HEK293T (cell line): ENCODE measurements at regions of chr17 and their contacts with region 1.

Region 1: GRCh38 chr17:44199553-44200477 is at the start of gene ATXN7L3:
- DNase-seq: peak; percentile 97

Region 2: DNA sequence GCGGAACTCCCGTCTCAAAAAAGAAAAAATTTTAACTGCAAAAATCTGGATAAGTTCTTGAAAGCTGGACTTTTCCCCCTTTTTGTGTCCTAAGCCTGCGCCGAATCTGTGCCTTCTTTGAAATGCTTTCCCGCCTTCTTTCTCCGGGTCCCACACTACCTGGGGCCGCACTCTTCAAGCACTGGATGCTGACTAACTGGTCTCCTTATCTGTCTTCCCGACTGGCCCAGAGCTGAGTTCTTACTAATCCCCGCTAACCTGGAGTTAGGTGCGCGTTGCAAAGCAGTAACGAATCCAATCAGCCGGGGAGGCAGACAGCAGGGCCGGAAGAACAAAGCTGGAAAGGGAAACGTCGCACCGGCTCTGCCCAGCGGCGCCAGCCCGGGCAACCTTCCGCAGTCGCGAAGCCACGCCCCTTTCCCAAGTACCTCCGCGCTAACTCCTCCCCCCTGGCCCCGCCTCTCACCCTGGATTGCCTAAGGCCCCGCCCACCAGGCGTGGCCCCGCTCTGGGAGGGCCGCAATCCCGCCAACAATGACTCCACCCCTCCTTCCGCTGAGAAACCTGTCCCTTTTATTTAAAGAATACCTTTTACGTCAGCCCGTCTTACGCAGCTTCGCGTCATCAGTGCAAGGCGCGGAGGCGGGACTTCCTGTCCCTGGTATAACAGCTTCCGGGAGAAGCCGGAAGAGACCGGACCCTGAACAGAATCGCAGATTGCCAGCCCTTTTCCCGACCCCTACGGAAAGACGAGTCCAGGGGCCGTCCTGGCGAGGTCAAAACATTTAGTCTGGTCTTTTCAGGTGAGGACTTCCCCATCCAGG is 13.3 kb before region 1 on chr17 and contains the start of gene TMUB2:
- CTCF ChIA-PET with region 1: interaction called, 6 read pairs
- POLR2A ChIA-PET with region 1: interaction called, 31 read pairs
- DNase-seq: peak; percentile 100

Region 3: GRCh38 chr17:44210342-44211192 is 10.8 kb after region 1 on chr17:
- CTCF ChIA-PET with region 1: interaction called, 6 read pairs
- POLR2A ChIA-PET with region 1: interaction called, 14 read pairs
- DNase-seq: peak; percentile 90

Region 4: GRCh38 chr17:44218344-44219107 is 18.7 kb after region 1 on chr17:
- CTCF ChIA-PET with region 1: interaction called, 5 read pairs
- POLR2A ChIA-PET with region 1: interaction called, 27 read pairs
- DNase-seq: peak; percentile 86

Region 5: DNA sequence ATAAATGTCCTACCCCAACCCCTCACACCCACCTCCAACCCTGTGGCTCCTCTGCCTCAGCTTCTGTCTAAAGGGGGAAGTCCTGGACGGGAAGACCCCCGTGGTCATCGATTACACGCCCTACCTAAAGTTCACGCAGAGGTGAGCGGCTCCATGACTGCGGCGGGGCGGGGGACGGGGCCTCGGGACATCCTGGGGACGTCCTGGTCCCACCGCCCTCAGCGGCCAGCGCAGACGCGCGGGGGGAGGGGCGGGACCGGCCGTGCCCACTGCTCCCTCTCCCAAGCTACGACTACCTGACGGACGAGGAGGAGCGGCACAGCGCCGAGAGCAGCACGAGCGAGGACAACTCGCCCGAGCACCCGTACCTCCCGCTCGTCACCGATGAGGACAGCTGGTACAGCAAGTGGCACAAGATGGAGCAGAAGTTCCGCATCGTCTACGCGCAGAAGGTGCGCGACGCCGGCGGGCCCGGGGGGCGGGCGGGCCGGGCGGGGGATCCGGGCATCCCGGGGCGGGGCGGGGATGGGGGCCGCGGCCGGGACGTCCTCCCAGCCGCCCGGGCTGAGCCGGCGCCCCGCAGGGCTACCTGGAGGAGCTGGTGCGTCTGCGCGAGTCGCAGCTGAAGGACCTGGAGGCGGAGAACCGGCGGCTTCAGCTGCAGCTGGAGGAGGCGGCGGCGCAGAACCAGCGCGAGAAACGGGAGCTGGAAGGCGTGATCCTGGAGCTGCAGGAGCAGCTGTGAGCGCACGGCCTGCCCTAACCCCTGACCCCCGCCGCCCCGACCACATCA is 115.2 kb after region 1 on chr17:
- CTCF ChIA-PET with region 1: no interaction called
- POLR2A ChIA-PET with region 1: no interaction called
- DNase-seq: peak; percentile 71

Region 6: GRCh38 chr17:44331249-44331760 is 131.5 kb after region 1 on chr17:
- CTCF ChIA-PET with region 1: interaction called, 13 read pairs
- POLR2A ChIA-PET with region 1: interaction called, 6 read pairs
- DNase-seq: peak; percentile 72